CD8-positive, alpha-beta T cell (primary cell): ENCODE measurements at regions of chr1 and their contacts with region 1.

Region 1: GRCh38 chr1:12132092-12132491 is 34.7 kb upstream of the TNFRSF1B start:
- DNase-seq: no peak
- ATAC-seq: no peak
- H3K4me3 ChIP-seq: no peak overlapping the region
- H3K4me3 Mint-ChIP-seq: no peak overlapping the region
- H3K27ac ChIP-seq: peak overlapping the region in 1 of 2 experiments; percentile 82
- H3K27ac Mint-ChIP-seq: peak overlapping the region; percentile 52
- H3K4me1 ChIP-seq: peaks cover 33% of the 10 kb centered on the region
- H3K4me1 Mint-ChIP-seq: peaks cover 27% of the 10 kb centered on the region
- H3K27me3 ChIP-seq: no peaks in the 10 kb centered on the region
- H3K27me3 Mint-ChIP-seq: no peaks in the 10 kb centered on the region
- CTCF ChIP-seq: no peak

Region 2: DNA sequence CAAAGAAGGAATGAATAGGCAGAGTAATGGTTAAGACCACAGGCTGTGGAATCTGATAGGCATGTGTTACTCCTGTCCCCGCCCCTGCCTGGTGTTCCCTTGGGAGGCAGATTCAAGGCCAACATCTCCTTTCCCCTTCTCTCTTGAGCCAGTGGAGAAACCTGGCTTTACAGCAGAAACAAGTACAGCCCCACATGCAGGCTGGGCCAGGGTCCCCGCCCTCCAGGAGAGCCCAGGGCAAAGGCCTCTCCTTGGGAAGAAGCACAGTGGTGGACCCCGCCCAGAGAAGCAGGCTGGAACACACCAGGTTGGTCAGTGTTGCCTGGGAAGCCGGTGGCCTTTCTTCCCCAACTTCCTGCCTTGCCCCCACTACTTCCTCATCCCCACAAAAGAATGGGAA is 363.3 kb before region 1 on chr1:
- CTCF ChIA-PET with region 1: no interaction called
- POLR2A ChIA-PET with region 1: no interaction called
- intact Hi-C with region 1: no loop called
- DNase-seq: no peak
- ATAC-seq: no peak
- H3K4me3 ChIP-seq: no peak overlapping the region
- H3K4me3 Mint-ChIP-seq: no peak overlapping the region
- H3K27ac ChIP-seq: no peak overlapping the region
- H3K27ac Mint-ChIP-seq: no peak overlapping the region
- H3K4me1 ChIP-seq: no peaks in the 10 kb centered on the region
- H3K4me1 Mint-ChIP-seq: no peaks in the 10 kb centered on the region
- H3K27me3 ChIP-seq: no peaks in the 10 kb centered on the region
- H3K27me3 Mint-ChIP-seq: peaks cover 2% of the 10 kb centered on the region
- CTCF ChIP-seq: no peak

Region 3: GRCh38 chr1:12153181-12153785 is 21.2 kb after region 1 on chr1:
- CTCF ChIA-PET with region 1: interaction called, 97 read pairs
- POLR2A ChIA-PET with region 1: interaction called, 9 read pairs
- intact Hi-C with region 1: loop called in 1 of 2 experiments (anchors 1 kb)
- DNase-seq: peak in 3 of 9 experiments; percentile 47 to 81 (median 66)
- ATAC-seq: no peak
- H3K4me3 ChIP-seq: no peak overlapping the region
- H3K4me3 Mint-ChIP-seq: peak overlapping the region; percentile 8
- H3K27ac ChIP-seq: peak overlapping the region in 1 of 2 experiments; percentile 89
- H3K27ac Mint-ChIP-seq: peak overlapping the region; percentile 80
- H3K4me1 ChIP-seq: peaks cover 69% of the 10 kb centered on the region
- H3K4me1 Mint-ChIP-seq: peaks cover 76% of the 10 kb centered on the region
- H3K27me3 ChIP-seq: no peaks in the 10 kb centered on the region
- H3K27me3 Mint-ChIP-seq: no peaks in the 10 kb centered on the region
- CTCF ChIP-seq: no peak

Region 4: DNA sequence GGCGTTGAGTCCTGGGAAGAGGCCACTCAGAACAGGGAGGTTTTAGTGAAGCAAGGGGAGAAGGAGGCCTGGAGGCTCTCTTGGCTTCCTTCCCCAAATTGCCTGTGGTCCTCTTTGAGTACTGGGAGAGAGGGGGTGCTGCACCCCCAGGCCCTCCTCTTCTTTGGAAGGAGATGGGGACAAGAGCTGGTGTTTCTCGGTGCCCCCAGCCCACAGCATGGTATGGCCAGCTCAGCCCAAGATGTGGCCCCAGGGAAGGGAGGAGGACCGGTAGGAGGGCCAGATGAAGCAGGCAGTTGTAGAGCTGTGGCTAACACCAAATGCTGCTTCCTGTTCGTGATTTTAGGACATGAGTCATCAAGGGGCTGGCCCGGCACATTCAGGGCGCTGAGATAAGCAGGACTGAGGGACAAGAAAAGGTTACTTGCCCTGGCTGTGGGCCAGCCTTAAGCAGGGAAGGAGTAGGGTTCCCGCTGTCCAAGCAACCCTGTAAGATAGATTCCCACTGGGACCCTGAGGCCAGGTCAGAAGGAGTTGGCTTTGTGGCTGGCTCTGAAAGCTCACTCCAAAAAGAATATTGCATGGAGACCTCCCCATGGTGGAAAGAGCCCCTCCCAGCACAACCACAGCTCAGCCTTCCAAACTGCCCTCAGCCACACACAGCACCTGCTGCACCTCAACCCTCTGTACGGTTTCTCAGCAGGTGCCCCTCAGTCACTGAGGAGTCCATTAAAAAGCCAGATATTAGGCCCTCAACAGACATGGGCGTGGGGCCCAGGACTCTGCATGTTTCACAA is 29.8 kb after region 1 on chr1:
- CTCF ChIA-PET with region 1: no interaction called
- POLR2A ChIA-PET with region 1: no interaction called
- intact Hi-C with region 1: loop called (anchors 2 to 5 kb)
- DNase-seq: peak; percentile 42 to 94 (median 79)
- ATAC-seq: peak; percentile 77
- H3K4me3 ChIP-seq: no peak overlapping the region
- H3K4me3 Mint-ChIP-seq: peak overlapping the region; percentile 53
- H3K27ac ChIP-seq: peak overlapping the region in 1 of 2 experiments; percentile 69
- H3K27ac Mint-ChIP-seq: peak overlapping the region; percentile 82
- H3K4me1 ChIP-seq: peaks cover 55% of the 10 kb centered on the region
- H3K4me1 Mint-ChIP-seq: peaks cover 63% of the 10 kb centered on the region
- H3K27me3 ChIP-seq: no peaks in the 10 kb centered on the region
- H3K27me3 Mint-ChIP-seq: no peaks in the 10 kb centered on the region
- CTCF ChIP-seq: no peak

Region 5: DNA sequence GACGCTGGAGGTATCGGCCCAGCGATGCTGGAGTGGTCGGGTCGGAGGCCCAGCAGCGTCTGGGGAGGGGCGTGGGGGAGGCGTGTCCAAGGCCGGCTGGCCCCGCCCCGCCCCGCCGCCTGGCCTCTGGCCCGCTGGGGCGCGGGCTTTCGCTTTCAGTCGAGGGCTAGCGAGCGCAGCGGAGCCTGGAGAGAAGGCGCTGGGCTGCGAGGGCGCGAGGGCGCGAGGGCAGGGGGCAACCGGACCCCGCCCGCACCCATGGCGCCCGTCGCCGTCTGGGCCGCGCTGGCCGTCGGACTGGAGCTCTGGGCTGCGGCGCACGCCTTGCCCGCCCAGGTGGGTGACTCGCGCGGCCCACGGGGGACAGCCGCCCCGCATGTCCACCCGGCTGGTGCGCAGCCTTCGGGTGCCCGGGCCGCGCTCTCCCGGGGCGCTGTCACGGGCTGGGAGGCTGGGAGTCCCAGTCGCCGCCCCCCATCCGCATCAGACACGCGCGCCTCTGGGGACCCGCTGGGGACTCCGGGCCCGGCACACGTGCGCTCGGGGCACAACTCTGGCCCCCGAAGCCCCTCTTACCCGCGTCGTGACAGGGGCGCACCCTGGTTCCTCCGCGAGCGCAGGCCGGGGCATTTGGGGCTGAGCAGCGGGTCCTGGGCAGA is 34.9 kb after region 1 on chr1 and contains the start of gene TNFRSF1B:
- CTCF ChIA-PET with region 1: interaction called, 155 read pairs
- POLR2A ChIA-PET with region 1: no interaction called
- intact Hi-C with region 1: loop called (anchors 2 to 5 kb)
- DNase-seq: peak in 8 of 9 experiments; percentile 50 to 83 (median 68)
- ATAC-seq: peak; percentile 58
- H3K4me3 ChIP-seq: peak within 1 kb of the TSS; percentile 68 to 76
- H3K4me3 Mint-ChIP-seq: peak within 1 kb of the TSS; percentile 99
- H3K27ac ChIP-seq: peak within 1 kb of the TSS; percentile 61 to 83
- H3K27ac Mint-ChIP-seq: peak within 1 kb of the TSS; percentile 98
- H3K4me1 ChIP-seq: peaks cover 43% of the 10 kb centered on the region
- H3K4me1 Mint-ChIP-seq: peaks cover 60% of the 10 kb centered on the region
- H3K27me3 ChIP-seq: no peaks in the 10 kb centered on the region
- H3K27me3 Mint-ChIP-seq: no peaks in the 10 kb centered on the region
- CTCF ChIP-seq: no peak
- total RNA-seq, gene TNFRSF1B: 82.6 to 100 TPM

Region 6: GRCh38 chr1:12184008-12184681 is 52.1 kb after region 1 on chr1:
- CTCF ChIA-PET with region 1: interaction called, 155 read pairs
- POLR2A ChIA-PET with region 1: interaction called, 3 read pairs
- intact Hi-C with region 1: loop called in 1 of 2 experiments (anchors 5 kb)
- DNase-seq: peak in 1 of 9 experiments; percentile 47
- ATAC-seq: no peak
- H3K4me3 ChIP-seq: no peak overlapping the region
- H3K4me3 Mint-ChIP-seq: no peak overlapping the region
- H3K27ac ChIP-seq: peak overlapping the region in 1 of 2 experiments; percentile 60
- H3K27ac Mint-ChIP-seq: peak overlapping the region; percentile 27
- H3K4me1 ChIP-seq: peaks cover 22% of the 10 kb centered on the region
- H3K4me1 Mint-ChIP-seq: peaks cover 47% of the 10 kb centered on the region
- H3K27me3 ChIP-seq: no peaks in the 10 kb centered on the region
- H3K27me3 Mint-ChIP-seq: no peaks in the 10 kb centered on the region
- CTCF ChIP-seq: no peak